BJ (cell line): ENCODE measurements at regions of chr12 and their contacts with region 1.

Region 1: DNA sequence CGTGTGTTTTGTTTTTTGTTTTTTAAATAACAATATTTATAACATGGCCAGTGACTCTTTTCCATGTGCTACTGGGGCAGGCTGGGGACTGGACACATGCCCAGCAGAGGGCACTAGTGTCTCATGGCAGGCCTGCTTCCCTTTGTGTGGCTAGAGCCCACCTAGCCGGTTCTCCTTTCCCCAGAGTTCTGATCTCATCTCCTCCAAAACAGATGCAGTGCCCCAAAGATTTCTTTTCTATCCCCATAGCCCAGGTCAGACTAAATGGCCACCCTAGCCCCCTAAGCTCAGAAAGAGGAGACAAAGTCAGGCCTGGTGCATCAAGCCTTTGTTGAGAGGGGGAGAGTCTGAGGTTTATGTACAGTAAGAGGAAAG is 21.2 kb downstream of the PRPF40B start:
- DNase-seq: no peak
- H3K4me3 ChIP-seq: no peak overlapping the region
- H3K27me3 ChIP-seq: no peaks in the 10 kb centered on the region
- CTCF ChIP-seq: peak; percentile 96

Region 2: GRCh38 chr12:49503674-49504180 is 140.9 kb before region 1 on chr12:
- CTCF ChIA-PET with region 1: no interaction called
- POLR2A ChIA-PET with region 1: no interaction called
- DNase-seq: no peak
- H3K4me3 ChIP-seq: no peak overlapping the region
- H3K27me3 ChIP-seq: no peaks in the 10 kb centered on the region
- CTCF ChIP-seq: no peak

Region 3: GRCh38 chr12:49662998-49663843 is 18.6 kb after region 1 on chr12:
- CTCF ChIA-PET with region 1: interaction called, 11 read pairs
- POLR2A ChIA-PET with region 1: no interaction called
- DNase-seq: peak; percentile 39
- H3K4me3 ChIP-seq: no peak overlapping the region
- H3K27me3 ChIP-seq: no peaks in the 10 kb centered on the region
- CTCF ChIP-seq: no peak